ENCODE measurements at regions of chr1 and their contacts with region 1.

Region 1: DNA sequence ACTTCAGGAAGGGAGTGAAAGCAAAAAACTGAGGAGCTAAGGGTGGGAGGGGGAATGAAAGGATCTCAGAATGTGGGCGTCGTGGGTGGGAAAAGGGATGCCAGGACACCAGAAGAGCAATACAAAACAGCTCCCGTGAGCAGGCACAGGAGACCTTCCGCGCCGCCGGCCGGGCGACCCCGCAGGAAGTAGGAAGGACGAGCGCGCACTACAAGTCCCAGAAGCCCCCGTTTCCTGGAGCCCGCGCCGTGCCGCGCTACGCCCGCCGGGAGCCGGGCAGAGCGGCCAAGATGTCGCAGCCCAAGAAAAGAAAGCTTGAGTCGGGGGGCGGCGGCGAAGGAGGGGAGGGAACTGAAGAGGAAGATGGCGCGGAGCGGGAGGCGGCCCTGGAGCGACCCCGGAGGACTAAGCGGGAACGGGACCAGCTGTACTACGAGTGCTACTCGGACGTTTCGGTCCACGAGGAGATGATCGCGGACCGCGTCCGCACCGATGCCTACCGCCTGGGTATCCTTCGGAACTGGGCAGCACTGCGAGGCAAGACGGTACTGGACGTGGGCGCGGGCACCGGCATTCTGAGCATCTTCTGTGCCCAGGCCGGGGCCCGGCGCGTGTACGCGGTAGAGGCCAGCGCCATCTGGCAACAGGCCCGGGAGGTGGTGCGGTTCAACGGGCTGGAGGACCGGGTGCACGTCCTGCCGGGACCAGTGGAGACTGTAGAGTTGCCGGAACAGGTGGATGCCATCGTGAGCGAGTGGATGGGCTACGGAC is at the start of gene PRMT6:
- DNase-seq: peak; percentile 89
- ATAC-seq: peak; percentile 94
- H3K4me3 Mint-ChIP-seq: peak within 1 kb of the TSS; percentile 89
- H3K27ac Mint-ChIP-seq: peak within 1 kb of the TSS; percentile 93
- H3K4me1 Mint-ChIP-seq: peaks cover 17% of the 10 kb centered on the region
- H3K27me3 Mint-ChIP-seq: no peaks in the 10 kb centered on the region
- total RNA-seq, gene PRMT6: 13.3 to 15.4 TPM

Region 2: DNA sequence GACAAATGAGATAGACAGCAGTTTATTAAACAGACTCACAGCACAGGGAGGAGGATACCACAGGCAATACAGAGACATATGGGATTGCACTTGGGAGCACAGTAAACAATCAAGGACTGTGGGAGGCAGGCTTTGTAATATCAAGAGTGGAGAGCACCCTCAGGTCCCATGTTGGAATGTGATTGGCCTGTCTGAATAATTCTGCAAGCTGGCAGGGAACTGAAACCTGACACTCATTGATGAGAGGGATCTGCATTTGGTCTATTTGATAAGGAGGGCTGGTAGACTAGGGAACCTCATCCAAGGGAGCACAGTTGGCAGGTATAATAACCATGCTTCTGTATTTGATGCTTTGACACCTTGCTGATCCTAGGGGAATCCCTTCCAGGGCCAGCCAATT is 70.0 kb before region 1 on chr1:
- CTCF ChIA-PET with region 1: no interaction called
- POLR2A ChIA-PET with region 1: no interaction called
- intact Hi-C with region 1: no loop called
- DNase-seq: no peak
- ATAC-seq: no peak
- H3K4me3 Mint-ChIP-seq: no peak overlapping the region
- H3K27ac Mint-ChIP-seq: no peak overlapping the region
- H3K4me1 Mint-ChIP-seq: no peaks in the 10 kb centered on the region
- H3K27me3 Mint-ChIP-seq: peaks cover 15% of the 10 kb centered on the region

Region 3: GRCh38 chr1:107142140-107142542 is 85.5 kb after region 1 on chr1:
- CTCF ChIA-PET with region 1: interaction called, 7 read pairs
- POLR2A ChIA-PET with region 1: no interaction called
- intact Hi-C with region 1: loop called (anchors 2 to 5 kb)
- DNase-seq: no peak
- ATAC-seq: no peak
- H3K4me3 Mint-ChIP-seq: peak overlapping the region; percentile 68
- H3K27ac Mint-ChIP-seq: no peak overlapping the region
- H3K4me1 Mint-ChIP-seq: peaks cover 18% of the 10 kb centered on the region
- H3K27me3 Mint-ChIP-seq: peaks cover 42% of the 10 kb centered on the region

Region 4: DNA sequence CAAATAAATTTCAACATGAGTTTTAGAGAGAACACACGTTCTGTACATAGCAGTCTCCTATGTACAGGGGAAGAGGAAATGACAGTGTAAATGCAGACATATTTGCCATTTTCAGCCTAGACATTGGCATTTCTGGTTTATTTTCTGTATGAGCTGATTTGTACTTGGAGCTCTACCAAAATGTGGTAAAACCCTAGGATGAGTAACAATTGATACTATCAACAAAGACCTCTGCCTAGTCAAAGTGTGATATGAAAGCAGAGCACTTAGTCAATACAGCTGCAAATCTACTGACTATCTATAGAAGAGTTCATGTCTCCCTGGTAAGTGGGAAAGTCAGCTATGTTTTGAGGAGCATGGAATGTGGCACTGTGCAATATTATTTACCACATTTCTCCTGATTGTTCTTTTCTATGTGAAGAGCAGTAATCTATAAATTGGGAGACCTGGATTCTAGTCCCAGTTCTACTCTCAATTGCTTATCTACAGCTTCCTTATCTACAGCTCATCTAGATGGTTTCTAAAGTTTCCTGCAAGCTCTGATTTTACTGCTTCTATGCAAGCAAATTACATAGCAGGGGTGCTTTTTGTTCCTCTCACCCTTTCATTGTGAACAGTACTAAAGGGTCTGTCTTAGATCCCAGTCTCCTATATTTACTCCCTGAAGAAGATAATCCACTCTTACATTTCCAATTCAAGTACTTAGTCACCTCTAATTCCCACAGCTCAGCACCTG is 418.4 kb after region 1 on chr1:
- CTCF ChIA-PET with region 1: no interaction called
- POLR2A ChIA-PET with region 1: no interaction called
- intact Hi-C with region 1: loop called in 1 of 2 experiments (anchors 10 kb)
- DNase-seq: no peak
- ATAC-seq: peak; percentile 96
- H3K4me3 Mint-ChIP-seq: no peak overlapping the region
- H3K27ac Mint-ChIP-seq: no peak overlapping the region
- H3K4me1 Mint-ChIP-seq: peaks cover 14% of the 10 kb centered on the region
- H3K27me3 Mint-ChIP-seq: peaks cover 34% of the 10 kb centered on the region

Measured in activated CD4-positive, alpha-beta T cell treated with anti-CD3 and anti-CD28 coated beads for 36 hours (primary cell).